Naive thymus-derived CD4-positive, alpha-beta T cell (primary cell): ENCODE measurements at regions of chr17 and their contacts with region 1.

Region 1: DNA sequence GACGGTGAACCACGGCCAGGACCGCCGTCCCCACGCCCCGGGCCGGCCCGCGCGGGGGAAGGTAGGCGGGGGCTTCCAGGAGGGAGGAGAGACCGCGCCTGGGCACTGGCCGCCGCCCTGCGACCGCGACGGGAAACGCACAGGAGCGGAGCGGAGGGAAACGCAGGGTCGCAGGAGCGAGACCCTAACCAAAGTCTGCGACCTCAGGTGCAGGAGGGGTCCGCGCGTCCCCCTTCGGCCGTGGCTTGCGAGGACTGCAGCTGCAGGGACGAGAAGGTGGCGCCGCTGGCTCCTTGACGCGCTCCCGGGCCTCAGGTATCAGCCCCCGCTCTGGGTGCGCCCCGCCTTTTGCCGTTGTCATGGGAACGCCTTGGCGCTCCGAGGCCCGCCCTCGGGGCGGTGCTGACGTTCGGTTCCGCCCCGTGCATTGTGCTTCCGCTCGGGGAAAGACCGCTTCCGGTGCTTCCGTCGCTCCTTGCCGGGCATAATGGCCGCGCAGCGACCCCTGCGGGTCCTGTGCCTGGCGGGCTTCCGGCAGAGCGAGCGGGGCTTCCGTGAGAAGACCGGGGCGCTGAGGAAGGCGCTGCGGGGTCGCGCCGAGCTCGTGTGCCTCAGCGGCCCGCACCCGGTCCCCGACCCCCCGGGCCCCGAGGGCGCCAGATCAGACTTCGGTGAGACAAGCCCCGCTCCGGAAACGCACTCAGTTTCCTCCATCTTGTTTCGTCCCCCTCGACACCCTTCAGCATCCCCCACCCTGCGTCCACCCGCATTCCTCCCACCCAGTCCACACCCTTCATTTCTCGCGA is at the start of gene OVCA2:
- DNase-seq: peak; percentile 94 to 98 (median 96)
- ATAC-seq: peak; percentile 97
- H3K4me3 ChIP-seq: peak within 1 kb of the TSS; percentile 86
- H3K4me3 Mint-ChIP-seq: peak within 1 kb of the TSS; percentile 89 to 100 (median 92)
- H3K27ac ChIP-seq: peak within 1 kb of the TSS; percentile 89
- H3K27ac Mint-ChIP-seq: peak within 1 kb of the TSS; percentile 87 to 99 (median 94)
- H3K4me1 ChIP-seq: peaks cover 8 to 16% of the 10 kb centered on the region in 2 donors
- H3K4me1 Mint-ChIP-seq: peaks cover 9 to 29% (median 22%) of the 10 kb centered on the region in 7 donors
- H3K27me3 ChIP-seq: no peaks in the 10 kb centered on the region
- H3K27me3 Mint-ChIP-seq: no peaks in the 10 kb centered on the region
- total RNA-seq, gene OVCA2: 24.5 to 37.9 (median 31.8) TPM

Region 2: DNA sequence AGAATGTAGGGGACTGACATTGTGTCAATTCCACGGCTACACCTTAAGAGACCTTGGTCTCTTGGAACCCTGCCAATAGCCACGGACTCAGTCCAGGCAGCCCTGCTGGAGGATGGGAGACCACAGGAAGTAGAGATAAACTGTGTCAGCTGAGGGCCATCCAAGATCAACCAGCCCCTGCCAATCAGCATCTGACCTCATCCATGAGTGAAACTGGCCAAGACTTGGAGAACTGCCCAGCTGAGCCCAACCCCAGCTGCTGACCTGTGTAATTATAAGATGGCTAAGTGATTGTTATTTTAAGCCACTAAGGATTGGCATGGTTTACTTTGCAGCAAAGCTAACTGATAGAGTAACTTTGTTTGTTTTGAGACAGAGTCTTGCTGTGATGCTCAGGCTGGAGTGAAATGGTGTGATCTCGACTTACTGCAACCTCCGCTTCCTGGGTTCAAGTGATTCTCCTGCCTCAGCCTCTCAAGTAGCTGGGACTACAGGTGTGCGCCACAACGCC is 628.4 kb before region 1 on chr17:
- CTCF ChIA-PET with region 1: no interaction called
- POLR2A ChIA-PET with region 1: no interaction called
- intact Hi-C with region 1: no loop called
- DNase-seq: no peak
- ATAC-seq: no peak
- H3K4me3 ChIP-seq: no peak overlapping the region
- H3K4me3 Mint-ChIP-seq: no peak overlapping the region
- H3K27ac ChIP-seq: no peak overlapping the region
- H3K27ac Mint-ChIP-seq: peak overlapping the region in 1 of 9 donors; percentile 17
- H3K4me1 ChIP-seq: no peaks in the 10 kb centered on the region
- H3K4me1 Mint-ChIP-seq: peaks cover 0 to 7% (median 0%) of the 10 kb centered on the region in 7 donors
- H3K27me3 ChIP-seq: no peaks in the 10 kb centered on the region
- H3K27me3 Mint-ChIP-seq: no peaks in the 10 kb centered on the region

Region 3: GRCh38 chr17:1455797-1456599 is 585.8 kb before region 1 on chr17 and contains the start of gene CRK:
- CTCF ChIA-PET with region 1: no interaction called
- POLR2A ChIA-PET with region 1: no interaction called
- intact Hi-C with region 1: loop called in 1 of 2 experiments (anchors 2 kb)
- DNase-seq: peak; percentile 97 to 100 (median 99)
- ATAC-seq: peak; percentile 97
- H3K4me3 ChIP-seq: peak within 1 kb of the TSS; percentile 94
- H3K4me3 Mint-ChIP-seq: peak within 1 kb of the TSS; percentile 86 to 95 (median 90)
- H3K27ac ChIP-seq: peak within 1 kb of the TSS; percentile 97
- H3K27ac Mint-ChIP-seq: peak within 1 kb of the TSS; percentile 63 to 92 (median 86)
- H3K4me1 ChIP-seq: peaks cover 18 to 37% of the 10 kb centered on the region in 2 donors
- H3K4me1 Mint-ChIP-seq: peaks cover 28 to 64% (median 48%) of the 10 kb centered on the region in 7 donors
- H3K27me3 ChIP-seq: no peaks in the 10 kb centered on the region
- H3K27me3 Mint-ChIP-seq: peaks cover 0 to 23% (median 4%) of the 10 kb centered on the region in 5 donors
- total RNA-seq, gene CRK: 16.9 to 29.0 (median 20.9) TPM

Region 4: DNA sequence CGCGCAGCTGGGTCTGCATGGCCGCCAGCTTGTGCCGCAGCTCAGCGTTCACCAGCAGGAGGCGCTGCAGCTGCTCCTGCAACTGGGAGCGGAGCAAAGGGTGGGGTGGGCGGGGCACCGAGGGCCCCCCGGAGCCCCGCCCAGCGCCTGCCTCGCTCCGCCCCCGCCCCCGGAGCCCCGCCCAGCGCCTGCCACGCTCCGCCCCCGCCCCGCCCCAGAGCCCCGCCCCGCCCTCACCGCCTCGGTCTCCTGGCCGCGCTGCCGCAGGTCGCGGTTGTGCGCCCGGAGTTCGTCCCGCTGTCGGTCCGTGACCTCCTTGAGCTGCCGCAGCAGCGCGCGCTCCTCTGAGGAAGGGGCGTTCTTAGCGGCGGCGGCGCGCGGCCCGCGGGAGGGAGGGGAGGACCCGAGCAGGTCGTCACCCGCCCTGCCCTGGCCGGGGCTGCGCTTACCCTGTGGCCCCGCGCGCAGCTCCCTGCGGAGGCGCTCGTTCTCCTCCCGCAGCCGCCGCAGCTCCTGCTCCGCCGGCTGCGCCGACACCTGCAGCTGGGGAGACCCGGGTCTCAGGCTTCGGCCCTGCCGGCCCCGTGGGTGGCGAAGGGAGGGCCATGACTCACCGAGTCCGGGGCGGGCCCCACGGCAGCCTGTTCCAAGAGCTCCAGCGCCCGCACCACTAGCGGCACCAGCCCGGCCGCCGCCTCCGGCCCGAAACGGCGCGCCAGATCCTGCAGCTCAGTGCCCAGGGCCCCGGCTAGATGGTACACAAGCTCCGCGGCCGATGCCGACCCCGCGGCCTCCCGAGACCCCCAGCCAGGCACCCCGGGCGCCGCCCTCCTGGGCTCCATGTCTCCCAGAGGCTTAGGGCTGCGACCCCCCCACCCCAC is 392.6 kb before region 1 on chr17:
- CTCF ChIA-PET with region 1: interaction called, 4 read pairs
- POLR2A ChIA-PET with region 1: no interaction called
- intact Hi-C with region 1: loop called (anchors 2 kb)
- DNase-seq: peak; percentile 88 to 97 (median 93)
- ATAC-seq: peak; percentile 90
- H3K4me3 ChIP-seq: peak overlapping the region; percentile 64
- H3K4me3 Mint-ChIP-seq: peak overlapping the region; percentile 65 to 81 (median 74)
- H3K27ac ChIP-seq: peak overlapping the region; percentile 69
- H3K27ac Mint-ChIP-seq: peak overlapping the region in 5 of 9 donors; percentile 38 to 58 (median 55)
- H3K4me1 ChIP-seq: peaks cover 15 to 21% of the 10 kb centered on the region in 2 donors
- H3K4me1 Mint-ChIP-seq: peaks cover 0 to 38% (median 10%) of the 10 kb centered on the region in 7 donors
- H3K27me3 ChIP-seq: no peaks in the 10 kb centered on the region
- H3K27me3 Mint-ChIP-seq: no peaks in the 10 kb centered on the region

Region 5: GRCh38 chr17:1870592-1870991 is 171.2 kb before region 1 on chr17:
- CTCF ChIA-PET with region 1: no interaction called
- POLR2A ChIA-PET with region 1: no interaction called
- intact Hi-C with region 1: loop called in 1 of 2 experiments (anchors 5 kb)
- DNase-seq: peak in 7 of 9 donors; percentile 60 to 86 (median 79)
- ATAC-seq: peak; percentile 81
- H3K4me3 ChIP-seq: no peak overlapping the region
- H3K4me3 Mint-ChIP-seq: peak overlapping the region; percentile 16 to 93 (median 82)
- H3K27ac ChIP-seq: peak overlapping the region; percentile 88
- H3K27ac Mint-ChIP-seq: peak overlapping the region; percentile 90 to 99 (median 96)
- H3K4me1 ChIP-seq: peaks cover 34 to 40% of the 10 kb centered on the region in 2 donors
- H3K4me1 Mint-ChIP-seq: peaks cover 43 to 79% (median 71%) of the 10 kb centered on the region in 7 donors
- H3K27me3 ChIP-seq: no peaks in the 10 kb centered on the region
- H3K27me3 Mint-ChIP-seq: no peaks in the 10 kb centered on the region

Region 6: GRCh38 chr17:1977583-1978395 is 64.0 kb before region 1 on chr17:
- CTCF ChIA-PET with region 1: no interaction called
- POLR2A ChIA-PET with region 1: no interaction called
- intact Hi-C with region 1: no loop called
- DNase-seq: no peak
- ATAC-seq: no peak
- H3K4me3 ChIP-seq: no peak overlapping the region
- H3K4me3 Mint-ChIP-seq: no peak overlapping the region
- H3K27ac ChIP-seq: no peak overlapping the region
- H3K27ac Mint-ChIP-seq: no peak overlapping the region
- H3K4me1 ChIP-seq: no peaks in the 10 kb centered on the region
- H3K4me1 Mint-ChIP-seq: peaks cover 7 to 19% (median 15%) of the 10 kb centered on the region in 7 donors
- H3K27me3 ChIP-seq: no peaks in the 10 kb centered on the region
- H3K27me3 Mint-ChIP-seq: peaks cover 13 to 46% (median 22%) of the 10 kb centered on the region in 5 donors

Region 7: GRCh38 chr17:2029911-2030778 is 11.6 kb before region 1 on chr17 and contains the start of gene DPH1:
- CTCF ChIA-PET with region 1: interaction called, 4 read pairs
- POLR2A ChIA-PET with region 1: interaction called, 5 read pairs
- intact Hi-C with region 1: loop called (anchors 1 kb)
- DNase-seq: peak; percentile 72 to 88 (median 83)
- ATAC-seq: peak; percentile 93
- H3K4me3 ChIP-seq: peak within 1 kb of the TSS; percentile 95
- H3K4me3 Mint-ChIP-seq: peak within 1 kb of the TSS; percentile 92 to 99 (median 96)
- H3K27ac ChIP-seq: peak within 1 kb of the TSS; percentile 85
- H3K27ac Mint-ChIP-seq: peak within 1 kb of the TSS; percentile 65 to 96 (median 89)
- H3K4me1 ChIP-seq: peaks cover 13 to 27% of the 10 kb centered on the region in 2 donors
- H3K4me1 Mint-ChIP-seq: peaks cover 17 to 43% (median 29%) of the 10 kb centered on the region in 7 donors
- H3K27me3 ChIP-seq: peaks cover 0 to 4% of the 10 kb centered on the region in 2 donors
- H3K27me3 Mint-ChIP-seq: peaks cover 9 to 38% (median 15%) of the 10 kb centered on the region in 5 donors
- total RNA-seq, gene DPH1: 47.3 to 124 (median 97.6) TPM

Region 8: DNA sequence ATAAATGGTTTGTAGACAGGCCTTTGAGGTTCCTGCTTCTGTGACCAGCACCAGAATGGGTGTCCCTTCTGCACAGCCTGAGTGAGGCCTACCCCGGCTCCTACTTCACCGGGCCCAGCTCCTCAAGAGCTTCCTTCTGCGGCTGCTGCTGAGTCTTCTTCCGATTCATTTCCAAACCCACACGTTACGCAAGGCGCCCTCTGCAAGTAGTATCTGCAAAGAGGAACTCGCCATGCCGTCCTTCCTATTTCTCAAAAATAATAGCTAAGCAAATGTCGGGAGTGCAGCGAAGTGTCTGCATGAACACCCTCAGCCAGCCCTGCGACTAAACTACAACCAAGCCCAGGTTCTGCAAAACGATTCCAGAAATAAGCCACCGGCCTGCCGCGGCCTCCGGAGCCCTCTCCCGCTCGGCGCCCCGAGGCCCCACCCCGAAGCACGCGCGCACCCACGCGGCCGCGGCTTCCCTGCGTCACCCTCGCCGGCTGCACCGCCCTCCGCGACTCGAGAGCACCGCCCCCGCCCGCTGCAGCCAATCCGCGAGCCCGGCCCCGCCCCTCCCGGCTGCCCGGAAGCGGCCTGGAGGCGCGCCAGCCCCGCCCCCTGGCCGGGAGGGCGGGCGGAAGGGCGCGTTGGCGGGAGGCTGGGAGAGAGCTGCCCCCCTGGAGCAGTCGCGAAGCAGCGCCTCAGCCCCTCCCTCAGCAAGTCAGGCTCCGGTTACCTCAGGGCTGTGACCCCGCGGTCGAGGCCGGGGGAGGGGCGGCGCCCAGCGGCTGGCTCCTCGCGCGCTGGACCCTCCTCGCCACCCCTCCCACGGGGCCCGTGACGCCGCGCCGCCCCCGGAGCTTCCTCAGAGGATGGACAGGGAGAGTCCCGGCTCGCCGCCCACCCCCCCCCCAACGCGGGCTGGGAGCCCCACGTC is 350.7 kb after region 1 on chr17:
- CTCF ChIA-PET with region 1: no interaction called
- POLR2A ChIA-PET with region 1: no interaction called
- intact Hi-C with region 1: loop called in 1 of 2 experiments (anchors 1 kb)
- DNase-seq: peak; percentile 94 to 100 (median 98)
- ATAC-seq: peak; percentile 78
- H3K4me3 ChIP-seq: peak overlapping the region; percentile 89
- H3K4me3 Mint-ChIP-seq: peak overlapping the region; percentile 88 to 97 (median 94)
- H3K27ac ChIP-seq: peak overlapping the region; percentile 100
- H3K27ac Mint-ChIP-seq: peak overlapping the region; percentile 90 to 98 (median 96)
- H3K4me1 ChIP-seq: peaks cover 15 to 52% of the 10 kb centered on the region in 2 donors
- H3K4me1 Mint-ChIP-seq: peaks cover 38 to 70% (median 56%) of the 10 kb centered on the region in 7 donors
- H3K27me3 ChIP-seq: no peaks in the 10 kb centered on the region
- H3K27me3 Mint-ChIP-seq: no peaks in the 10 kb centered on the region